GM10248 (cell line): ENCODE measurements at regions of chr11 and their contacts with region 1.

Region 1: DNA sequence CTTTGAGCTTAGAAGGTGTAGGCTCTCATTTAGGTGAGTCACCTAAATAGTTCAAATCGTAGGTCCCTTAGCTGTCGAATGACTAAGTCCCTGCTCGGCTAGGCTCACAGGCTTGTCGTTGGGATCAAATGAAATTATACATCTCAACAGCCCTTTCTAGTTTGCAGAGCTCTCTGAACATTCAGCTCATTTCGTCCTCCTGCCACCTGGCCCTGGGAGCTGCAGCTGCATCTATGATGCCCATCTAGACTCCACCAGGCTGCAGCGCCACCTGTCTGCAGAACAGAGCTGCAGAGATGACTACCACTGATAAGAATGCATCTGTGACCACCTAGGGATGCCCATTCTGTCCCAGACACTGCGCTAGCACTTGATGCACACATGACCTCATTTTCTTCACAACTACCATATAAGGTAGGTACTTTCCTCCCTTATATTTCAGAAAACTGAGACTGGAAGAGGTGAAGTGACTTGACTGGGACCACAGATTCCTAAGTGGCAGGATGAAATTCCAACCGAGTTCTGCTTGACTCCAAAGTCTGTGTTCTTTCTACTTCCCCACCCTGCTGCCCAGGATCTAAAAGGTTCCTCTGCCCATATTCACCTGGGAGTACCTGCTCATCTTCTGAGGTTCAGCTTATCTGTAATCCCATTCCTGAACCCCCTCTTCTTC is 141.1 kb upstream of the NARS2 start:
- DNase-seq: peak; percentile 56
- CTCF ChIP-seq: peak; percentile 87

Region 2: GRCh38 chr11:78635814-78636506 is 79.8 kb before region 1 on chr11:
- CTCF ChIA-PET with region 1: interaction called, 14 read pairs
- POLR2A ChIA-PET with region 1: no interaction called
- DNase-seq: no peak
- CTCF ChIP-seq: no peak

Region 3: DNA sequence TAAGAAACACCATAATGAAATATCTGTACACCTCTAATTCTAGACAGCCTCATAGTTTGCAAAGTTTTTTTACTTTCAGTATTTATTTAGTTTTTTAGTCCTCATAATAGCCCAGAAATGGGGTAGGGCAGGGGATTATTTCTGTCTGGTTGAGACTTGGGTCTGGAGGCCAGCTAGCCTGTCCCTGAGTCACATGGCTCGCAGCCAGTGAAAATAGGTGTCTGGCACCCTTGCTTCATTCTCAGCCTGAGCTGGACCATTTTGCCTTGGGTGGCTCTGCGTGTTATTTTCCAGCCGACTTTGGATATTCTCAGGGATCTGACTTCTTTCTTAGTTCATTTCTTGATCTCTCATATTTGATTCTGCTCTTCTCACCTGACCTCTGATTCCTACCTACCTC is 17.2 kb before region 1 on chr11:
- CTCF ChIA-PET with region 1: interaction called, 15 read pairs
- POLR2A ChIA-PET with region 1: no interaction called
- DNase-seq: no peak
- CTCF ChIP-seq: no peak

Region 4: GRCh38 chr11:78731027-78731426 is 15.3 kb after region 1 on chr11:
- CTCF ChIA-PET with region 1: interaction called, 25 read pairs
- POLR2A ChIA-PET with region 1: no interaction called
- DNase-seq: no peak
- CTCF ChIP-seq: no peak

Region 5: GRCh38 chr11:78737891-78738290 is 22.1 kb after region 1 on chr11:
- CTCF ChIA-PET with region 1: interaction called, 24 read pairs
- POLR2A ChIA-PET with region 1: no interaction called
- DNase-seq: no peak
- CTCF ChIP-seq: no peak

Region 6: GRCh38 chr11:78784321-78785061 is 68.7 kb after region 1 on chr11:
- CTCF ChIA-PET with region 1: no interaction called
- POLR2A ChIA-PET with region 1: no interaction called
- DNase-seq: no peak
- CTCF ChIP-seq: no peak